Colonic mucosa (tissue), 4 donors: ENCODE measurements at regions of chr20 and their contacts with region 1.

Region 1: GRCh38 chr20:10708351-10709185 is 34.8 kb upstream of the JAG1 start:
- DNase-seq: no peak
- H3K4me3 ChIP-seq: no peak overlapping the region
- H3K27ac ChIP-seq: peak overlapping the region; percentile 59
- H3K4me1 ChIP-seq: no peaks in the 10 kb centered on the region
- H3K27me3 ChIP-seq: no peaks in the 10 kb centered on the region
- CTCF ChIP-seq: no peak

Region 2: GRCh38 chr20:10857352-10858070 is 148.9 kb after region 1 on chr20:
- intact Hi-C with region 1: loop called (anchors 10 kb)
- DNase-seq: peak; percentile 88
- H3K4me3 ChIP-seq: no peak overlapping the region
- H3K27ac ChIP-seq: peak overlapping the region; percentile 78
- H3K4me1 ChIP-seq: no peaks in the 10 kb centered on the region
- H3K27me3 ChIP-seq: no peaks in the 10 kb centered on the region
- CTCF ChIP-seq: no peak